HCT116 (cell line): ENCODE measurements at regions of chr16 and their contacts with region 1.

Region 1: DNA sequence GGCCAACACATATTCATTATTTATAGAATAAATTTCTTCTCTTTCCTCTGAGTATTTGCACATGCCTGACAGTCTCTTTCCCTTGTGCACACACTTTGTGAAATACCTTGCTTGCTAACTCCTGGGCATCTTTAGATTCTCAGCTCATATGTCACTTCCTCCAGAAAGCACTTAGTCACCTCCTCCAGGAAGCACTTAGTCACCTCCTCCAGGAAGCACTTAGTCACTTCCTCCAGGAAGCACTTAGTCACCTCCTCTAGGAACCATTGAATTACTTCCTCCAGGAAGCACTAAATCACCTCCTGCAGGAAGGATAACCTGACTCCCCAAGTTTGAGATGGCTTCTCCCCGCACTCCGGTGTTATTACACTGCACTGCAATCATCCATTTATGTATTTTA is 462.5 kb upstream of the EEF2KMT start:
- DNase-seq: peak; percentile 29
- ATAC-seq: peak; percentile 52
- H3K4me3 ChIP-seq: peak overlapping the region in 1 of 2 experiments; percentile 36; a peak in 2 of 4 replicates
- H3K27ac ChIP-seq: peak overlapping the region; percentile 43; the same call in 1 of the 2 replicates
- H3K4me1 ChIP-seq: peaks cover 0 to 15% of the 10 kb centered on the region in 2 experiments; a peak in 3 of 4 replicates
- H3K27me3 ChIP-seq: no peaks in the 10 kb centered on the region
- CTCF ChIP-seq: no peak
- POLR2A ChIP-seq: no peak
- RAD21 ChIP-seq: no peak

Region 2: GRCh38 chr16:5479926-5480325 is 80.2 kb before region 1 on chr16:
- CTCF ChIA-PET with region 1: no interaction called
- POLR2A ChIA-PET with region 1: no interaction called
- RAD21 ChIA-PET with region 1: no interaction called
- intact Hi-C with region 1: no loop called
- DNase-seq: no peak
- ATAC-seq: no peak
- H3K4me3 ChIP-seq: no peak overlapping the region
- H3K27ac ChIP-seq: no peak overlapping the region
- H3K4me1 ChIP-seq: no peaks in the 10 kb centered on the region
- H3K27me3 ChIP-seq: peaks cover 38% of the 10 kb centered on the region
- CTCF ChIP-seq: no peak
- POLR2A ChIP-seq: no peak
- RAD21 ChIP-seq: no peak

Region 3: DNA sequence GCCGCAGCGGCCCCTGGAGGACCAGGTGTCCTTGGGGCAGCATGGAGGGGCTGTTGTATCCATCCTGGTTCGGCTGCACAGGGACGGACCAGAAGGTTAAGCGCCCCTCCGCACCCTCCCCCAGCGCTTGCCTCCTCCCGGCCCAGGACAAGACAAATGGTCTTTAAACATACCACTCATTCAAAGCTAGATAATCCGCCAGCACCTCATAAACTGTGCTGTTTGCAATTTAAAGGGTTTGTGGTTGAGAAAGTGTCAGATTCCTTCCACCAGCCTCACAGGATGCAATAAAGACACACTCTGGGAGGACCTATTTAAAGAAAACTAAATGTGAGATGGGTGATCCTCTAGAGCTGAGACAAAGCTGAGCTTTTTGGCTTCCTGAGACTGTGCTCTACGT is 36.3 kb before region 1 on chr16:
- CTCF ChIA-PET with region 1: no interaction called
- POLR2A ChIA-PET with region 1: no interaction called
- RAD21 ChIA-PET with region 1: no interaction called
- intact Hi-C with region 1: loop called (anchors 5 kb)
- DNase-seq: no peak
- ATAC-seq: no peak
- H3K4me3 ChIP-seq: no peak overlapping the region
- H3K27ac ChIP-seq: no peak overlapping the region
- H3K4me1 ChIP-seq: no peaks in the 10 kb centered on the region
- H3K27me3 ChIP-seq: peaks cover 14% of the 10 kb centered on the region; the same call in 1 of the 2 replicates
- CTCF ChIP-seq: no peak
- POLR2A ChIP-seq: no peak
- RAD21 ChIP-seq: no peak